Ascending aorta (tissue), 2 donors: ENCODE measurements at regions of chr11 and their contacts with region 1.

Region 1: GRCh38 chr11:102346748-102347461 is at the start of gene BIRC2:
- DNase-seq: peak; percentile 66 to 97
- H3K4me3 ChIP-seq: peak within 1 kb of the TSS; percentile 78 to 81
- H3K27ac ChIP-seq: peak within 1 kb of the TSS; percentile 98
- H3K4me1 ChIP-seq: peaks cover 2 to 3% of the 10 kb centered on the region in 2 donors
- H3K27me3 ChIP-seq: no peaks in the 10 kb centered on the region
- CTCF ChIP-seq: peak; percentile 86 to 87 (median 86)
- total RNA-seq, gene BIRC2: 27.7 TPM

Region 2: GRCh38 chr11:102047305-102047924 is 299.5 kb before region 1 on chr11 and contains the start of gene CFAP300:
- intact Hi-C with region 1: loop called (anchors 1 kb)
- DNase-seq: peak; percentile 67 to 95
- H3K4me3 ChIP-seq: peak within 1 kb of the TSS; percentile 59 to 78
- H3K27ac ChIP-seq: peak within 1 kb of the TSS; percentile 81 to 90
- H3K4me1 ChIP-seq: peaks cover 0 to 4% of the 10 kb centered on the region in 2 donors
- H3K27me3 ChIP-seq: no peaks in the 10 kb centered on the region
- CTCF ChIP-seq: no peak
- total RNA-seq, gene CFAP300: not detected

Region 3: DNA sequence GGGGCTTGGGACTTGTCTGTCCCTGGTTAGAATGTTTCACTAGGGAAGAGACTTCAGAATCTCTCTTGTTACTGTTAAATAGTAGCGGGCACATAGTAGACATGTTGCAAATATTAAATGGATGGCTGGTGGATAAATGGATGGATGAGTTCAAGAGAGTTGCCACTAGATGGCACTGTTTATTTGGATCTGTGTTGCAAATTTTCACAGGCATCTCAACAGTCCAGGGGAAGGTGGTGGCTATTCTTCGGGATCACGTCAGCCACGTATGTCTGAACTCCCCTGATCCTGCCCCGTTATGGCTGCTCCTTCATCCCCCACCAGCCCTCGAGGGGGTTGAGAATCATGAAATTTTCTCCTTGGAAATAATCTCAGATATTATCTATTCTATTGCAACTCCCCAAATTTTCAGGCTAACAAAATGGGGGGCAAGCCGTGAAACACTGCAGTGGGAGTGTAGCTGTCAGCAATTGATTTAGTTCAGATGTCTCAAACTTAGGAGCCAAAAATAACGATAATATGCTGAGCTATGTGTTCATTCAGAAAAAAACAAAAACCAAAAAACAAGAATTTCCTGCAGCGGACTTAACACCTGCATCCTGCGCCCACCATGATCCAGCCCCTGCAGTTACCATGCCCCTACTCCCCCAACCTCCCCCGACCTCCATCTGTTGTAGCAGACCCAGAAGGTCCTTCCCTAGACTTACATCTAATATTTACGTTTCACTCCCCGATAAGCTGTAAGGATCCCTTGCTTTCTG is 58.8 kb before region 1 on chr11:
- intact Hi-C with region 1: loop called (anchors 2 kb)
- DNase-seq: peak in 1 of 2 donors; percentile 72
- H3K4me3 ChIP-seq: peak overlapping the region; percentile 30 to 54
- H3K27ac ChIP-seq: peak overlapping the region in 1 of 2 donors; percentile 41
- H3K4me1 ChIP-seq: peaks cover 11 to 21% of the 10 kb centered on the region in 2 donors
- H3K27me3 ChIP-seq: no peaks in the 10 kb centered on the region
- CTCF ChIP-seq: peak; percentile 54 to 77 (median 75)

Region 4: DNA sequence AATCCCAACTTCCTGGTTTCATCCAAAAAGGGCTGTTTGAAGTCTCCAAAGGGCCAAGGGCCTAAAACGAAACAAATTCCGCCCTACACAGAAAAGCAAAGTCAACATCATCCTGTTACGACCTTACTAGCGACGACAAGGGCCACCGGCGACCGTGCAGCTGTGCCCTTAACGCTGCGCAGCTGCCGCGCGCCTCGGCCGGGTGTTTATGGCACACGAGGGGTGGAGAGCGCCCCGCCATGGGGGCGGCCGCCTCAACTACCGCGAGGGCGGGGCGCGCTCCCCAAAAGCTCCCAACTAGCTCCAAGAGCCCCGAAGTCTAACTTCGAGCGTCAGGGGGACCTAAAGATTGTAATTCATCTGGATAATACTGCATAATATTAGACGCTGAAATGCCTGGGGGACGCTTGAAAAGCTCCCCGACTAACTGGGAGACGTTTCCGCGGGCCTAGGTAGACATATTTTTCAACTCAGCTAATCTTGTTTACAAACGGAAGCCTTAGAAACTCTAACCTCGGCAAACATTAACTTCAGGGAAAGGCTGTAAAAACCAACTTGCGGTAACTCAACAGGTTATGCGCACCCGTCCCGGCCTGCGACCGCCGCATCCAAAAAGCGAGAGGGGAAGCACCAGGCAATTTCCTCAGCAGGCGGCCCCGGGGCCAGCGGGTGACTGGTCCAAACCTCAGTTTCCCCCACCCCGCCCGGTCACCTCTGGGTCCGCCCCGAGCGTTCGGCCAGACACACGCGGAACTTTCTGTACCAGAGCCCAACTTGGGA is 105.0 kb after region 1 on chr11:
- intact Hi-C with region 1: loop called (anchors 2 kb)
- DNase-seq: peak in 1 of 2 donors; percentile 73
- H3K4me3 ChIP-seq: peak overlapping the region; percentile 93 to 94
- H3K27ac ChIP-seq: peak overlapping the region; percentile 80 to 81
- H3K4me1 ChIP-seq: peaks cover 0 to 5% of the 10 kb centered on the region in 2 donors
- H3K27me3 ChIP-seq: no peaks in the 10 kb centered on the region
- CTCF ChIP-seq: peak in 1 of 3 experiments; percentile 28

Region 5: DNA sequence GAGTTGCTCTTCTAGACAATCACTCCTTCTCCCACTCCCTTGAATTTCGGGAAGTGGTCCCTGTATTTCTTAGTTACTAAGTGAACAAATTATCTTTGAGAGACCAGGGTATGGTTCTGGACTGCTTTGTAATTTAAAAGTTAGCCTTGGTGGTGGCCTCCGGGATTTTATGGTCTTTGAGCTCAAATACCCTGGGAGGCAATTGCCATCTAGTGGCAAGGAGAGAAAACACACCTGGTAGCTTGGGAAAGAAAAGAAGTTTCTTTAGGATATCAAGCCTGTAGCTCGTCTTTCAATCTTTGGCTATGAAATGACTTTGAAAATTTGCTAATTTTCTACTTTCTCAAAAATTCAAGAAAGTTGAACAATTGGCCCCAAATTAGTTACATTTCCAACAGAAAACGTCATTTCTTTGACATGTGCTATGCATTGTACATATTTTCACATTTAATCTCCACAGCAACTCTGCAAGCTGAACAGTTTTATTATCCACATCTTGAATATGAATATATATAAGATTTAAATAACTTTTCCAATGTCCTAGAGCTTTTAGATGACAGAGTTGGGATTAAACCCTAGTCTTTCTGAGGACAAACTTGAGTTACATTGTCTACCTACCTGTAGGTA is 319.5 kb after region 1 on chr11:
- intact Hi-C with region 1: loop called (anchors 10 kb)
- DNase-seq: no peak
- H3K4me3 ChIP-seq: no peak overlapping the region
- H3K27ac ChIP-seq: no peak overlapping the region
- H3K4me1 ChIP-seq: no peaks in the 10 kb centered on the region
- H3K27me3 ChIP-seq: no peaks in the 10 kb centered on the region
- CTCF ChIP-seq: peak; percentile 47 to 68 (median 57)